OCI-LY7 (cell line): ENCODE measurements at regions of chr4 and their contacts with region 1.

Region 1: GRCh38 chr4:182917182-182918043 is at the start of gene DCTD:
- DNase-seq: peak; percentile 93
- H3K4me3 ChIP-seq: peak within 1 kb of the TSS; percentile 85
- H3K27ac ChIP-seq: peak within 1 kb of the TSS; percentile 88
- H3K4me1 ChIP-seq: peaks cover 25% of the 10 kb centered on the region
- CTCF ChIP-seq: peak; percentile 75
- total RNA-seq, gene DCTD: 37.8 and 42.5 TPM in 2 replicates

Region 2: GRCh38 chr4:182874304-182874751 is 43.1 kb before region 1 on chr4:
- CTCF ChIA-PET with region 1: no interaction called
- POLR2A ChIA-PET with region 1: no interaction called
- intact Hi-C with region 1: loop called (anchors 5 kb)
- DNase-seq: peak; percentile 39
- H3K4me3 ChIP-seq: no peak overlapping the region
- H3K27ac ChIP-seq: no peak overlapping the region
- H3K4me1 ChIP-seq: peaks cover 19% of the 10 kb centered on the region
- CTCF ChIP-seq: no peak

Region 3: DNA sequence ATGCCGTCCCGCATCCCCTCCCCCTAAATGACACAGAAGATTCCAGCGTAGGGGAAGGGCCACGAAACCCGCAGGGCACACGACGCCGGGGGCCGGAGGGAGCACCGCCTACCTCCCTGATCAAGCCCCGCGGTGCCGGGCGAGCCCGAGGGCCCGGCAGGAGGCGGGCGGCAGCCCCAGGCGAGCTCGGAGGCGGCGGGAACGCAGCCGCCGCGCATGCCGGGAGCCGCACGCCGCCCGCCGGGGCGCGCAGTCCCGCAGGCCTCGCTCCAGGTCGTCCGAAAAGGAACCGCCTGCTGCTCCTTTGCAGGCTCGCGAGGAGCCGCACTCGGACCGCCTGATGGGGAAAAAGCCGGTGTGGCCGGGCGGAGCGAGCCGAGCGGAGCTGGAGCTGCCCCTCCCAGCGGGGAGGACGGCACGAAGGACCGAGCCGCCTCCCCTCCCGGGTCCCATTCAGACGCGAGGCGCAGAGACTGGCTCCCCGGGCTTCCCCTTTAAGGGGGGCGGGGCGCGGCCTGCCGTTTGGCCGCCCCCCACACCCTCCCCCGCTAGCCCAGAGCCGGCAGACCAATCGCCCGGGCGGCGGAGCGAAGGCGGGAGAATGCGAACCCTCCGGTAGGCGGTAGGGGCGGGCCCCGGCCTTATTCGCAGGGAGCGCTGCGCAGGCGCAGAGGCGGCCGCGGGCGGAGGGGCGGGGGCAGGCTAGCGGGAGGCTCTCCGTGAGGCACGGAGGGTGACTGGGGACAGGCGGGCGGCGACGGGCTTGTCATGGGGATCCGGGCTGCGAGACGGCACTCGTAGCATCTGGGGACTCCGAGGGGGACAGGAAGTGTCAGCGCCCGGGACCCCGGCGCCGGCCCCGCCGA is 586.9 kb after region 1 on chr4:
- CTCF ChIA-PET with region 1: no interaction called
- POLR2A ChIA-PET with region 1: no interaction called
- intact Hi-C with region 1: loop called (anchors 2 kb)
- DNase-seq: peak; percentile 98
- H3K4me3 ChIP-seq: peak overlapping the region; percentile 100
- H3K27ac ChIP-seq: peak overlapping the region; percentile 89
- H3K4me1 ChIP-seq: peaks cover 23% of the 10 kb centered on the region
- CTCF ChIP-seq: no peak